ENCODE measurements at regions of chr5 and their contacts with region 1.

Region 1: DNA sequence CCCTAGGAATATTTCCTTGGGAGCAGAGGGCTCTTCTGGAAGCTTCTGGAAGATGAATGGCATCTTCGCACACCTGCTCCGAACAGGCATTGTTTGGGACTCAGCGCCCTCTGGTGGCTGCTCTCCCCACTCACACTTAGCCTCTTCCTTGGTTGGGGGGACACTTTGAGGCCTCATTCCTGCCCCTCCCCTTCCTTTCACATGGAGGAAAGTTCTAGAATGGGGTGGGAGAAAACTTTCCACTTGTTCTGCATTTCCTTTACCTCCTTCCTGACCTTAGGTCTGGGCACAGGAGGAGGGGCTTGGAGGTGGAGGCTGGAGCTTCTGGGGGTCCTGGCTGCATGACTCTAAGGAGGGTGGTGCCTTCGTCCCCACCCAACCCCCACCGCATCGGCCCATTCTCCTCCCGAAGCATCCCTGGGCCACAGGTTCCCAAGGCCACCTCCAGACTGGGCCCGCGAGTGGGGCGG is 19.3 kb upstream of the SMIM32 start:
- DNase-seq: peak in 6 of 10 donors; percentile 31 to 56 (median 50)
- H3K4me3 ChIP-seq: no peak overlapping the region
- H3K27ac ChIP-seq: no peak overlapping the region
- H3K27me3 ChIP-seq: peaks cover 0 to 25% (median 2%) of the 10 kb centered on the region in 45 donors
- CTCF ChIP-seq: peak; percentile 64 to 97 (median 90)

Region 2: DNA sequence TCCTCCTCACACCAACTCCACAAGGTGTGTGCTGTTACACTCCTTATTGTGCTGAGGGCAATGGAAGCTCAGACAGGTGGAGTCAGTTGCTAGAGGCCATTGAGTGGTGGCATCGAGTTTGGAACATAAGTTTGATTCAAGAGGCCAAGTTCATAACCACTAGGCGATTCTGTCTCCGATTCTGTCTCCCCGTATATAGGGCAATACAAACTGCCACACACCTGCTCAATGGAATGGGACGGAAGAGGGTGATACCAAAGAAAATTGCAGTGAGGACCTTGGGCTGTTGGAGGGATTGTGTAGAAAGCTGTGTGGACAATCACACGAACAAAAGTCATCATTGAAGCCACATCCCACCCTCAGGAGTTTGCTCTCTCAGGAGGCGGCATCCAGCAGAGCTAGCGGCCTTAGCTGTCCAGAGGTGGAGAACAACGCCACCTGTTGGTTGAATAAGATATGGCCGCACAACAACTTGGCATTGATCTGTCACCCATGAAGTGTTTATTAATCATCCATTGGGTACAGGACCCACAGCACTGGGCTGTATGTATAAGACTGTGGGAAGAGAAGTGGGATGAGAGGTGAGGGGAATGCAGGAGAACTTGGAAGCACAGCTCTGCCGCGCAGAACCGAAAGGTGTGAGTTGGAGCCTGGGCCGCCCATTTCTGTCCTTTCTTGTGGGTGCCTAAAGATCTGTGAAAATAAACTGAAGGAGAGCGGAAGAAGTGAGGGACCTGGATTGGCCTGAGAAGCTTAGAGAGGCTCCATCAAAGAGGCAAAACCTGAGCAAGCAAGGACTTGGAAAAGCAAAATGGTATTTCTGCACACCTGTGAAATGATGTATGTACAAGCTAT is 660.5 kb before region 1 on chr5:
- intact Hi-C with region 1: loop called in 1 of 2 experiments (anchors 10 kb)
- DNase-seq: peak in 9 of 10 donors; percentile 49 to 79 (median 71)
- H3K4me3 ChIP-seq: no peak overlapping the region
- H3K27ac ChIP-seq: no peak overlapping the region
- H3K27me3 ChIP-seq: peaks cover 0 to 51% (median 12%) of the 10 kb centered on the region in 45 donors
- CTCF ChIP-seq: peak; percentile 81 to 99 (median 92)

Region 3: DNA sequence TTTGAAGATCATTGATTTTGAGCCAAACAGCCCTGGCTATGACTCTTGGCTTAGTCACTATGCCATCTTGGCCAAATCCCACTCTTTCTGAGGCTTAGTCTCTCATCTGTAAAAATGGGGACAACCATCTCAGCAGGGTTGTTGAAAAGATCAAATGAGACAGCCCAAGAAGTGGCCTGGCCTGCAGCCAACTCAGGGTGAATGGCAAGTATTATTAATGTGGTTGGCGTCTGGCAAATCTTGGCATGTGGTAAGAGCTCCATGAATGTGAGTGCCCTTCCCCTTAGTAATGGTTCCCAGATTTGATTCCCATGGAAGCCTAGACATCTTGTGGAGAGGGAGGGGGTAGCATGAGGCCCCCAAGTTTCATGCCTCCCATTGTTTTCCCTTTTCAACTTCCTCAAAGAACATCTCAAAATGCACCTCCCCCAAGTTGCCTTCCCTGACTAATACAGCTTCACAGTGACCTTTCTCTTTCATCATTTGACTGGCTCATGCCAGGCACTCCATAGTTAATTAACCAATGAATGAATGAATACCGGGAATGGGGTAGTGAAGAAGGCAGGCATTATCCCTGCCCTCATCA is 195.2 kb before region 1 on chr5:
- intact Hi-C with region 1: no loop called
- DNase-seq: peak in 6 of 10 donors; percentile 6 to 73 (median 58)
- H3K4me3 ChIP-seq: no peak overlapping the region
- H3K27ac ChIP-seq: no peak overlapping the region
- H3K27me3 ChIP-seq: peaks cover 0 to 9% (median 0%) of the 10 kb centered on the region in 45 donors
- CTCF ChIP-seq: no peak